HEK293T (cell line): ENCODE measurements at regions of chr11 and their contacts with region 1.

Region 1: GRCh38 chr11:82701847-82702520 is 31.7 kb downstream of the FAM181B start:
- DNase-seq: peak; percentile 65

Region 2: DNA sequence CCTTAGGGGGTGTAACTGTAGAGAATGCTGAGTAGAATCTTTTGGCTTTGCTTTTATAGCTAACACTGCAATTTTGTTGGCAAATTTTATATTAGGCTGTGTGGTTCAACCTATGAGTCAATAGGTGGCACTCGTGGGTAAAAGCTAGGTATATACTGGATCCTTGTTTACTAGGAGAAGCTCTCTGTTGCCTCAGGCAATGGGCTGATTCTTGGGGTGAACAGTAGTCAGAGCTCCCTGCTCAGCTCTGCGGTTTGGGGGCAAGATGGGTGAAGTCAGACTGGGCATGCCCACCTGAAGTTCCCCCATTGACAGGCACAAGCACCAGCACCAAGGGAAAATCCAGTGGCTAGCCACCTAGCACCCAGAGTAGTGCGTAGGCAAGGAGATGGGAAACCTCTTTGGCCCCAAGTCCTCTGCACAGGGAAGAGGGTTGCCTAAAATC is 207.0 kb before region 1 on chr11:
- CTCF ChIA-PET with region 1: interaction called, 11 read pairs
- POLR2A ChIA-PET with region 1: no interaction called
- DNase-seq: peak; percentile 12

Region 3: DNA sequence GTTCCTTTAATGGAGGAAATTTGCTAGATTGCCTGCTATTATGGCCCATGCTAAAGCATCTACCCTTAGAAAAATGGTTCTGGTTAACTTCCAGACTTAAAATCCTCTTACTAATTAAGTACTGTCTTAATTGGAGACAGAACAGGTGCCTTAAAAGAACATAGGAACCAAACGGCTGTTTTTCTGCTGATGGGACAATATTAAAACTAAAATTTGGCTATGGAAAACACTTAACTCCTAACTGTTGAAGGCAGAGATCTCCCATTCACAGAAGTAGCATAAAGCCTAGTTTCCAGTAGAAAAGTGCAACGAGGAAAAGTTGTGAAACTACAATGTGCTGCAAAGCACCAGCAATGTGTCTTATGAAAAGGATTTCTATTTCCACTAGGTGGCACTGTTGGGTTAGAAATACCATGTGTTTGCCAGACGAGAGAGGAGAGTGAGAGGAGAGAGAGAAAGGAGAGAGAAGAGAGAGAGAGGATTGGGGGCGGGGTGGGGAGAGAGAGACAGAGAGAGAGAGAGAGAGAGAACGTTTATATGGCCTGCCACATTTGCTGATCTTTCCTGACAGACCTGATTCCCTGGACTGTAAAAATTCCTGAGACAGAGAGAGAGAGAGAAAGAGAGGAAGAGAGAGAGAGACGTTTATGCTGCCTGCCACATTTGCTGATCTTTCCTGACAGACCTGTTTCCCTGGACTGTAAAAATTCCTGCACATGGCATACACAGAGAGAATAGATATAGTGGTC is 19.8 kb before region 1 on chr11:
- CTCF ChIA-PET with region 1: interaction called, 22 read pairs
- POLR2A ChIA-PET with region 1: no interaction called
- DNase-seq: peak; percentile 54